T-cell (primary cell): ENCODE measurements at regions of chr15 and their contacts with region 1.

Region 1: GRCh38 chr15:70358011-70358819 is 260.5 kb upstream of the TLE3 start:
- DNase-seq: no peak
- ATAC-seq: no peak
- H3K4me3 ChIP-seq: no peak overlapping the region
- H3K4me3 Mint-ChIP-seq: no peak overlapping the region
- H3K27ac ChIP-seq: no peak overlapping the region
- H3K27ac Mint-ChIP-seq: no peak overlapping the region
- H3K4me1 ChIP-seq: no peaks in the 10 kb centered on the region
- H3K4me1 Mint-ChIP-seq: no peaks in the 10 kb centered on the region
- H3K27me3 ChIP-seq: peaks cover 0 to 42% of the 10 kb centered on the region in 2 experiments
- H3K27me3 Mint-ChIP-seq: peaks cover 4 to 17% of the 10 kb centered on the region in 2 donors

Region 2: DNA sequence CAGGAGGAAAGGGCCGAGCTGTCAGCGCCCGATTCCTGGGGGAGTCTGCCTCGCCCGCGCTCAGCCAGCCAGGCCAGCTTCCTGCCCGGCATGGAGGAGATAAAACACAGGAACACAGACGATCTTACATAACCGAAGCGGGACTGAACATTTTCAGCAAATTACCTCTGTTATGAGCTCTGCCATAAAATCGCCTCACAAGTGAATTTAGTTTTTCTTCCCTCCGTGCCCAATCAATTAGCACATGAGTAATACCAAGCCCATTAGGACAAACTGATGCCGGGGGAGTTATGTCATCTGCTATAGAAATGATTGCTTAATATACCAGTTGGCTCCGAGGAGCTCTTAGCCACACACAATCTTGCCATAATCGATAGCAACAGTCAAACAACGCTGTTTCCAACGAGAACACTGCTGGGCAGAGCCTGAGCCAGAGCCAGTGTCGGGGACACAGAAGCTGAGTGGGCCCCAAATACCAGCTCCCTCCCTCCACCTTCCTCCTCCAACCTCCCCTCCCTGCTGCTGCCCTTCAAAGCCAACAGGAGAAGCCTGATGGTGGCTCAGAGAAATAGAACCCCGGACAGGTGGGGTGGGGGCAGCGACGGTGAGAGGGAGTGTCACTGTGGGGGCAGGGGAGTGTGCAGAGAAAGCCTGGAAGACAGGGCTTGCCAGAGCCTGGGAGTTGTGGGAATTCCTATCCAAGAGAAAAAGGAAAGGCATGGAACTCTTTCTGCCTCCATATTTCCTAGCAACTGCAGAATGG is 18.9 kb after region 1 on chr15:
- CTCF ChIA-PET with region 1: interaction called in 1 of 2 experiments, 15 read pairs
- POLR2A ChIA-PET with region 1: no interaction called
- DNase-seq: peak in 1 of 35 experiments; percentile 4
- ATAC-seq: no peak
- H3K4me3 ChIP-seq: no peak overlapping the region
- H3K4me3 Mint-ChIP-seq: no peak overlapping the region
- H3K27ac ChIP-seq: no peak overlapping the region
- H3K27ac Mint-ChIP-seq: no peak overlapping the region
- H3K4me1 ChIP-seq: peaks cover 4 to 12% of the 10 kb centered on the region in 2 experiments
- H3K4me1 Mint-ChIP-seq: peaks cover 0 to 16% (median 0%) of the 10 kb centered on the region in 3 donors
- H3K27me3 ChIP-seq: peaks cover 0 to 41% of the 10 kb centered on the region in 2 experiments
- H3K27me3 Mint-ChIP-seq: peaks cover 11 to 24% of the 10 kb centered on the region in 2 donors

Region 3: DNA sequence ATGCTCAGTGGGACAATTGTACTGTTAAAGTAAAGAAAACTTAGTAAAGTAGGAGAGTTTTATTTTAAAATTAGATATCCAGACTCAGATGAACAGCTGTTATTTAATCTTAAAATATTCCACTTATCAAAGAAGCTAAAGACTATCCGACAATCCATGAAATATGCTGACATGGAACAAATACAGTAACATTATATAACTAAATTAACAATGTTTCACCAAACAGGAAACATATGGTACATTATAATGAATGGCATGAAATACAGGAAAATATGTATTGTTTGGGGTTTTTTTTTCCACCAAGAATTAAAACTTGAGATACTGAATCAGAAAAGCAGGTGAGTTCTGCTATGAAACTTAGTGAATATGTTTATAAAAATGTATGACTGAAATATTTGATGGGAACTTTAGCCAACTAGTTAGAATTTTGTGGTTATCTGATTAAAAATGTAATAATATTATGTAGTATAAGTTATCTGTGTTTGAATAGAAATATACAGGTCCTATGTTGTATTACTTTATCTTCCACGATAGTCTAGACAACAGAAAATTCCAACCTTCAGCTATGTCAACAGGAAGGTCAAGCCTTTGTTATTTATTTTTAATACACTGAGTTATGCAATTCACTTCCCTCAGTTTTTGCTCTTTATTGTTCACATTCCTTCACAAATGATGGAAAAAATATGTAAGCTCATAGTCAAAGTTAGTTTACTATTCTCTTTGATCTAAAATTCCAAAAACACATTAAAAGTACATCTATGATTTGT is 332.5 kb after region 1 on chr15:
- CTCF ChIA-PET with region 1: no interaction called
- POLR2A ChIA-PET with region 1: no interaction called
- DNase-seq: no peak
- ATAC-seq: no peak
- H3K4me3 ChIP-seq: no peak overlapping the region
- H3K4me3 Mint-ChIP-seq: no peak overlapping the region
- H3K27ac ChIP-seq: no peak overlapping the region
- H3K27ac Mint-ChIP-seq: no peak overlapping the region
- H3K4me1 ChIP-seq: no peaks in the 10 kb centered on the region
- H3K4me1 Mint-ChIP-seq: peaks cover 0 to 2% (median 0%) of the 10 kb centered on the region in 3 donors
- H3K27me3 ChIP-seq: peaks cover 3 to 5% of the 10 kb centered on the region in 2 experiments
- H3K27me3 Mint-ChIP-seq: peaks cover 10 to 18% of the 10 kb centered on the region in 2 donors